Activated naive CD4-positive, alpha-beta T cell treated with anti-CD3 and anti-CD28 coated beads for 36 hours (primary cell): ENCODE measurements at regions of chr12 and their contacts with region 1.

Region 1: GRCh38 chr12:75511116-75512048 is at the start of gene KRR1:
- DNase-seq: peak; percentile 95
- H3K4me3 Mint-ChIP-seq: peak within 1 kb of the TSS; percentile 95
- H3K27ac Mint-ChIP-seq: peak within 1 kb of the TSS; percentile 98
- H3K4me1 Mint-ChIP-seq: peaks cover 29% of the 10 kb centered on the region
- H3K27me3 Mint-ChIP-seq: no peaks in the 10 kb centered on the region
- total RNA-seq, gene KRR1: 81.1 to 83.9 TPM

Region 2: DNA sequence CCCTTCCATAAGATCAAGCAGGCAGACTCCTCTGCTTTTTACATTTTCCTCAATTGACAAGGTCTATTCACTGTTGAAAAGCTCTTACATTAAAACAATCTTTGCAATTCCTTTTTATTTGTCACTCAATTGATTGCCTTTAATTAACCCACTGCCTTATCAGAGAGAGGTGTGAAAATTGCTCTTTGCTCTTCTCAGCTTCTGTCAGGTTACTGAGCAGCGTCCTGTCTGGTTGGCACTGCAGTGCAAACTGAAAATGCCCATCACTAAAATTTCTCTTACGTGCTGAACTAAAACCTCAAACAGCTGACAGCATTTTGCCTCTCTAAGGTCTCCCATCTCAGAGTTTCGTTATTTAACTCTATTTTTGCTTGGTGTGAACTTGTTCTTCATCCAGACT is 1477.9 kb before region 1 on chr12:
- CTCF ChIA-PET with region 1: no interaction called
- intact Hi-C with region 1: no loop called
- DNase-seq: no peak
- H3K4me3 Mint-ChIP-seq: no peak overlapping the region
- H3K27ac Mint-ChIP-seq: no peak overlapping the region
- H3K4me1 Mint-ChIP-seq: no peaks in the 10 kb centered on the region
- H3K27me3 Mint-ChIP-seq: no peaks in the 10 kb centered on the region

Region 3: GRCh38 chr12:74537707-74538385 is 973.5 kb before region 1 on chr12 and contains the start of gene ATXN7L3B:
- CTCF ChIA-PET with region 1: no interaction called
- intact Hi-C with region 1: loop called (anchors 1 kb)
- DNase-seq: peak; percentile 94
- H3K4me3 Mint-ChIP-seq: peak within 1 kb of the TSS; percentile 91
- H3K27ac Mint-ChIP-seq: peak within 1 kb of the TSS; percentile 97
- H3K4me1 Mint-ChIP-seq: peaks cover 48% of the 10 kb centered on the region
- H3K27me3 Mint-ChIP-seq: no peaks in the 10 kb centered on the region
- total RNA-seq, gene ATXN7L3B: 19.8 to 19.9 TPM

Region 4: DNA sequence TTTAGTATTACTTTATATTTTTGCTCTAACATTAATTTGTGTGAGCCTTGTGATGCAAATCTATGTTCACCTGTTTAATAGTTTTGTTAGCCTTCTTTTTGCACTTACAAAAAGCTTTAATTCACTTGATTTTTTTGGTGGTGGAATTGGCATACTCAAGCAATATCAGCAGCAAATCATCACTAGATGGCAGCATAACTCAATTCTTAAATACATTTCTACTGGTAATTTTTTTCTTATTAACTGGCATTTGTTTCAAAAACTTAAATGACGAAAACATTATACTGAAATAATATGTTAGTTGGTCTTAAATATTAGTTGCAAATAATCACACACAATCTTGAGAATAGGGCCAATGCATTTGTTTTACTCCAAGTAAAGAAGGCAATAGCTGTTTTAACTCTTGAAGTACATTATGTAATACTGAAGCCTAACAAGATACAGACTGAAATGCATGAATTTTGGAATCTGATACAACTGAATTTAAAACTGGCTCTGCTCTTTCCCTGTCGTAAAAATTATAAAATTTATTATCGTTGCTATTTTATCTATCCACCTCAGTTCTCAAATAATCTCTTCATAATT is 822.2 kb before region 1 on chr12:
- CTCF ChIA-PET with region 1: no interaction called
- intact Hi-C with region 1: loop called (anchors 2 kb)
- DNase-seq: no peak
- H3K4me3 Mint-ChIP-seq: no peak overlapping the region
- H3K27ac Mint-ChIP-seq: no peak overlapping the region
- H3K4me1 Mint-ChIP-seq: no peaks in the 10 kb centered on the region
- H3K27me3 Mint-ChIP-seq: peaks cover 8% of the 10 kb centered on the region

Region 5: GRCh38 chr12:75489613-75490210 is 21.7 kb before region 1 on chr12:
- CTCF ChIA-PET with region 1: interaction called, 25 read pairs
- intact Hi-C with region 1: loop called (anchors 1 kb)
- DNase-seq: peak; percentile 62
- H3K4me3 Mint-ChIP-seq: no peak overlapping the region
- H3K27ac Mint-ChIP-seq: peak overlapping the region; percentile 25
- H3K4me1 Mint-ChIP-seq: peaks cover 19% of the 10 kb centered on the region
- H3K27me3 Mint-ChIP-seq: no peaks in the 10 kb centered on the region

Region 6: GRCh38 chr12:76763743-76764675 is 1252.6 kb after region 1 on chr12 and contains the start of gene ZDHHC17:
- CTCF ChIA-PET with region 1: no interaction called
- intact Hi-C with region 1: loop called (anchors 2 kb)
- DNase-seq: peak; percentile 88
- H3K4me3 Mint-ChIP-seq: peak within 1 kb of the TSS; percentile 98
- H3K27ac Mint-ChIP-seq: peak within 1 kb of the TSS; percentile 91
- H3K4me1 Mint-ChIP-seq: peaks cover 38% of the 10 kb centered on the region
- H3K27me3 Mint-ChIP-seq: no peaks in the 10 kb centered on the region
- total RNA-seq, gene ZDHHC17: 19.1 to 22.2 TPM